ENCODE measurements at regions of chr2 and their contacts with region 1.

Region 1: DNA sequence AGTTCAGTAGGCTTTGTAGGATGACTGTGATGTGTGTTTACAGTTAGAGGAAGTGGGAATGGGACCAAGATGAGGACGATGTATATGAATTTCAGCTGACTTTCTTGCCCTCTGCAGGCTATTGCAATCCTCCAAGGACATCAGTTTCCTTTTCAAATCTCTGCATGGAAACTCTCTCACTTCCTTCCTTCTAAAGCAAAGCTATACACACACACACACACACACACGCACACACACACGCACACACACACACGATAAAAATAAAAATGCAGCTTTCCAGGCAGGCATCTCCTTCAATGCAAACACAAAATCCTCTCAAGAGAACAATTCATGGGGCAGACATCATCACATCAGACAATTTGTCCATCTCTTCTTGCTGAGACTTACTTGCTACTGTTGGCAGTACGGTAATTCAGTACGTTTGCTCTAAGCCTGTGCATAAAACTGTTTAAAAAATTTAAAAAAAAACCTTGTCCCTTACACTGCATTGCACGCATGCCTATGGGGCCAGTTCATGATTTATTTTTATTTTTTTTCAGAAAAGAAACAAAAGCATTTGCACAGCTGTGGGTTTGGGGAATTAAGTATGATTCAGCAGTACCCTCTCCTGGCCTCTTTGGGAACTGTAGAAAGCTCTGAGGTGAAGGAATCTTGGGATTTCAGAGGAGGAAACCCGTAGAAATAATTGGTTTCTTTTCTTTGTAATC is 27.1 kb upstream of the ICOS start:
- DNase-seq: peak; percentile 67 to 85 (median 78)
- H3K4me3 ChIP-seq: peak overlapping the region; percentile 19 to 68 (median 49)
- H3K4me3 Mint-ChIP-seq: peak overlapping the region; percentile 37 to 90
- H3K27ac ChIP-seq: peak overlapping the region in 1 of 2 donors; percentile 85
- H3K27ac Mint-ChIP-seq: peak overlapping the region; percentile 84 to 95 (median 90)
- H3K4me1 ChIP-seq: peaks cover 32 to 39% of the 10 kb centered on the region in 2 donors
- H3K4me1 Mint-ChIP-seq: peaks cover 32% of the 10 kb centered on the region
- H3K27me3 ChIP-seq: no peaks in the 10 kb centered on the region
- H3K27me3 Mint-ChIP-seq: peaks cover 0 to 2% (median 0%) of the 10 kb centered on the region in 3 donors
- CTCF ChIP-seq: peak; percentile 92

Region 2: DNA sequence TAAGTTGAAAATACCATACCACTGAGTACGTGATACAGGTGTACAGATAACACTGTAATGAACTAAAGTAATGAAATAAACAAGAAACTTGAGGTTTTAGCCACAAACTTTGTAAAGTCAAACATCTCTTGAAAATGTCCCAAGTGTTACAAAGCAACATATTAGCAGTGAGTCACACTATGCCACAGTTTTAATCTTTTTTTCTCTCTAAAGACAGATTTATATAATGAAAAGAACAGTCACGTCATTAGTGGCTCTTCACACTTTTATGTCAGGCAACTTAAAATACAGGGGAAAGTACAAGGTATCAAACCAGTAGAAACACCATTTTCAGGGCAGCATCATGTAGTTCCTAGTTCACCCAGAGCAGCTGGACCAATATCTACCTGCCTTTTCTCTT is 416.4 kb before region 1 on chr2:
- intact Hi-C with region 1: loop called in 1 of 2 experiments (anchors 5 kb)
- DNase-seq: no peak
- H3K4me3 ChIP-seq: no peak overlapping the region
- H3K4me3 Mint-ChIP-seq: no peak overlapping the region
- H3K27ac ChIP-seq: no peak overlapping the region
- H3K27ac Mint-ChIP-seq: peak overlapping the region in 1 of 7 donors; percentile 27
- H3K4me1 ChIP-seq: peaks cover 0 to under 1% of the 10 kb centered on the region in 2 donors
- H3K4me1 Mint-ChIP-seq: peaks cover 3% of the 10 kb centered on the region
- H3K27me3 ChIP-seq: no peaks in the 10 kb centered on the region
- H3K27me3 Mint-ChIP-seq: peaks cover 0 to 4% (median 1%) of the 10 kb centered on the region in 3 donors
- CTCF ChIP-seq: no peak

Region 3: DNA sequence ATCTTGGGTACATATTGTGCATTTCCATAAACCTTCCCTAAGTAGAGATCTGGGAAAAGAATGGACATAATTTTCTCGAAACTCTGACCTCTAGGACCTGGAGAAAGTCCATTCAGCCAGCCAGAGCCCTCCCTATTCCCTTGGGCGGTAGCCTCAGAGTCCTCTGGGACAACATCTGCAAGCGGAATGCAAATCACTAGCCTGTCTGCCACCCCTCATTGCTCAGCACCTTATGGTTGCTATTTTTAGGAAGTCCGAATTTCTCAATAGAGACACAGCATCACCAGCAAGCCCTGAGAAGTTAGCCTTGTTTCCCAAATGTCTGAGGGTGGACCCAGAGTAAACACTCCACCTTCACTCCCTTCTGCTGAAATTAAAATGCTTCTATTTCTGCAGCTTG is 220.6 kb before region 1 on chr2:
- intact Hi-C with region 1: no loop called
- DNase-seq: peak; percentile 68 to 78 (median 75)
- H3K4me3 ChIP-seq: peak overlapping the region in 1 of 3 experiments; percentile 12
- H3K4me3 Mint-ChIP-seq: peak overlapping the region in 1 of 2 donors; percentile 64
- H3K27ac ChIP-seq: peak overlapping the region in 1 of 2 donors; percentile 21
- H3K27ac Mint-ChIP-seq: peak overlapping the region in 5 of 7 donors; percentile 25 to 68 (median 43)
- H3K4me1 ChIP-seq: peaks cover 27 to 28% of the 10 kb centered on the region in 2 donors
- H3K4me1 Mint-ChIP-seq: peaks cover 36% of the 10 kb centered on the region
- H3K27me3 ChIP-seq: no peaks in the 10 kb centered on the region
- H3K27me3 Mint-ChIP-seq: no peaks in the 10 kb centered on the region
- CTCF ChIP-seq: no peak

Region 4: DNA sequence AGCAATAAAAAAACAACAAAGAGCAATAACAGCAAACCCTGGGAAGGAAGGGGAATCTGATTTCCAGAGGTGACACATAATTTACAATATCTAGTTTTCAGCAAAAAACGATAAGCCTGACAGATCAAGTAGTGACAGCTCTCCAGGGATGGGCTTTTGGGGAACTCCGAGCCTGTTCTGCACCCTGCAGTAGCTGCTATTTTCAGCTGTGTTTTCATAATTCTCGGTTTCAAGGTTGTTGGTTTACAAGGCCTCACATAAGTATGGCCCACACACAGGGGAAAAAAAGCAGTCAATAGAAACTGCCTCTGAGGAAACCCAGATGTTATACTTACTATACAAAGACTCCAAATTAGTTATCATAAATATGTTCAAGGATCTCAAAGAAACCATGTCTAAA is 109.5 kb before region 1 on chr2:
- intact Hi-C with region 1: loop called in 1 of 2 experiments (anchors 5 kb)
- DNase-seq: no peak
- H3K4me3 ChIP-seq: no peak overlapping the region
- H3K4me3 Mint-ChIP-seq: no peak overlapping the region
- H3K27ac ChIP-seq: no peak overlapping the region
- H3K27ac Mint-ChIP-seq: peak overlapping the region in 1 of 7 donors; percentile 12
- H3K4me1 ChIP-seq: peaks cover 30 to 43% of the 10 kb centered on the region in 2 donors
- H3K4me1 Mint-ChIP-seq: peaks cover 59% of the 10 kb centered on the region
- H3K27me3 ChIP-seq: no peaks in the 10 kb centered on the region
- H3K27me3 Mint-ChIP-seq: no peaks in the 10 kb centered on the region
- CTCF ChIP-seq: no peak

Region 5: DNA sequence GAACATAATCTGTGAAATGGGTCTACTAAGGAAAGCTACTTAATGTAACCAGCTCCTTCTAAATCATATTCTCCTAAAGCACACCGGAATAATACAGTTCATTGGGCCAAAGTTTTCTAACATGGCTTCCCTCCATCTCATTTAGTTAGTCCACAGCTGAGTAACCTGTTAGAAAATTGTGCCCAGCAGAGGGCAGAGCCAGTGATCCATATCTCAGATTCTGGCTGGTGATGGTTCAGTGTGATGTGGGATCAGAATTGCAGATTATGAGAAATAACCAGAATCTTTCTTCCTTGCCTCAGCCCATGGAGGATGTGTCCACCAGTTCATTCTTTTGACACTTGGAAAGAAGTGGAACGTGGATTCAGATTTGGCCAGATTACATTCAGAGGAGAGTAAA is 51.2 kb before region 1 on chr2:
- intact Hi-C with region 1: loop called (anchors 10 kb)
- DNase-seq: peak; percentile 8 to 19 (median 19)
- H3K4me3 ChIP-seq: no peak overlapping the region
- H3K4me3 Mint-ChIP-seq: no peak overlapping the region
- H3K27ac ChIP-seq: no peak overlapping the region
- H3K27ac Mint-ChIP-seq: no peak overlapping the region
- H3K4me1 ChIP-seq: peaks cover 9 to 11% of the 10 kb centered on the region in 2 donors
- H3K4me1 Mint-ChIP-seq: peaks cover 15% of the 10 kb centered on the region
- H3K27me3 ChIP-seq: no peaks in the 10 kb centered on the region
- H3K27me3 Mint-ChIP-seq: peaks cover 0 to 5% (median 2%) of the 10 kb centered on the region in 3 donors
- CTCF ChIP-seq: peak; percentile 32

Region 6: DNA sequence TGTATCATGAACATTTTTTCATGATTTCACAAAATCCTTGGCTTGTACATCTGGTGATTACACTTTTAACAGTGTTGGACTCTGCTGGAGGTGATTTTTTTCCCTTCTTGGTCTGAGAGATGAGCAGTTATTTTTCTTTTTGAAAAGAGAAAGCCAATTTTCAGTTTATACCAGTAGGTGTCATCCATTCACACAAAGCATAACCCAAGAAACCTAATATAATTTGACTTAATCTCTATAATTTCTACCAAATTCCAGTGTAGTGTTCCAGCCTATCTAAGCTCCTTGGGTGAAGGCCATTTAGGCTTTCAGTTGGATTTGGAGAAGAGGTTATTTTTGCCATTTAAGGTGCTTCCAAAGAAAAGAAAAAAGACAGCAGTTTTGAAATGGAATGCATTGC is 19.4 kb after region 1 on chr2:
- intact Hi-C with region 1: no loop called
- DNase-seq: no peak
- H3K4me3 ChIP-seq: no peak overlapping the region
- H3K4me3 Mint-ChIP-seq: no peak overlapping the region
- H3K27ac ChIP-seq: no peak overlapping the region
- H3K27ac Mint-ChIP-seq: no peak overlapping the region
- H3K4me1 ChIP-seq: no peaks in the 10 kb centered on the region
- H3K4me1 Mint-ChIP-seq: peaks cover 2% of the 10 kb centered on the region
- H3K27me3 ChIP-seq: no peaks in the 10 kb centered on the region
- H3K27me3 Mint-ChIP-seq: peaks cover 0 to 4% (median 0%) of the 10 kb centered on the region in 3 donors
- CTCF ChIP-seq: peak; percentile 20

Region 7: GRCh38 chr2:204072443-204073324 is 163.3 kb after region 1 on chr2:
- intact Hi-C with region 1: no loop called
- DNase-seq: no peak
- H3K4me3 ChIP-seq: no peak overlapping the region
- H3K4me3 Mint-ChIP-seq: no peak overlapping the region
- H3K27ac ChIP-seq: no peak overlapping the region
- H3K27ac Mint-ChIP-seq: no peak overlapping the region
- H3K4me1 ChIP-seq: no peaks in the 10 kb centered on the region
- H3K4me1 Mint-ChIP-seq: peaks cover 3% of the 10 kb centered on the region
- H3K27me3 ChIP-seq: no peaks in the 10 kb centered on the region
- H3K27me3 Mint-ChIP-seq: peaks cover 2 to 9% (median 4%) of the 10 kb centered on the region in 3 donors
- CTCF ChIP-seq: peak; percentile 47

Measured in CD14-positive monocyte (primary cell).